AG04449 (cell line): ENCODE measurements at regions of chr7 and their contacts with region 1.

Region 1: DNA sequence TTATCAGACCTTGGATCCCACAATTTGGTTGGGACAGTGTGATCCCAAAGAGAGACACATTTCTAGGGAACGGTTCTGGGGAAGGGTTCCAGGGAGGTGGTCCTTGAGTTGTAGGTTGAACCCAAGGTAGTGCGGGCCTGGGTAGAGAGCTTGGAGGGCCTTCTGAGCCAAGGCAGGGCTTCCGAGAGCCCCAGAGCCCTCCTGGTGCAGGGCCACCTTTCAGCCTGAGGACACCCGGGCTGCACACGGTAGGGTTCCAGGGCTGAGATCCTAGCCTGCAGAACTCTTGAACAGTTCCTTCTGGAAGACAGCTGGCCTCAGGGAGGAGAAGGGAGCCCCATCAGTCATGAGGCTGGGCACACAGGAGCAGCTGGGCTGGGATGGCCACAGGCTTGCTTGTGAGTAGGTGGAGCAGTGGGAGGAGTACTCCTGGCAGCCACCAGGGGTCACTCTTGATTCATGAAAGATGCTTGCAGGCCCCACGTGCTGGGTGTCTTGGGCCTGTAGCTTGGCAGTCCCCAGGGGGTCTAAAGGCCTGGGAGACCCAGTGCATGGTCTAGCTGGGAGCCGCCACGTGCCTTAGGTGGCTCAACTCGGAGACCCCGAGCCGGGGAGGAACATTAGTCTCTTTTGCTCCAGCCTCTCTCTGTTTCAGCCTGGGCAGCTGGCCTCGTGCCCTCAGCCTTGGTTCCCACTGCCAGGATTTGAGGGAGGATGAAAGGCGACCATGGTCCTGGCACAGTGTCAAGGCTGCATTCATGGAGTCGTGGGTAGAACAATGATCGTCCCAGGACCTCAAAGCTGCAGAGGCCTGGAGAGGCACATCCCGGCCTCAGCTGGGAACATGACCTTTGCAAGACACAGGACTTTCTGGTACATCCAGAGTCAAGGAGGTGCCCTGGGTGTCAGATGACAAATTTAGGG is 381.6 kb downstream of the TYW1 start:
- DNase-seq: peak; percentile 16
- H3K4me3 ChIP-seq: no peak overlapping the region
- CTCF ChIP-seq: peak; percentile 80

Region 2: DNA sequence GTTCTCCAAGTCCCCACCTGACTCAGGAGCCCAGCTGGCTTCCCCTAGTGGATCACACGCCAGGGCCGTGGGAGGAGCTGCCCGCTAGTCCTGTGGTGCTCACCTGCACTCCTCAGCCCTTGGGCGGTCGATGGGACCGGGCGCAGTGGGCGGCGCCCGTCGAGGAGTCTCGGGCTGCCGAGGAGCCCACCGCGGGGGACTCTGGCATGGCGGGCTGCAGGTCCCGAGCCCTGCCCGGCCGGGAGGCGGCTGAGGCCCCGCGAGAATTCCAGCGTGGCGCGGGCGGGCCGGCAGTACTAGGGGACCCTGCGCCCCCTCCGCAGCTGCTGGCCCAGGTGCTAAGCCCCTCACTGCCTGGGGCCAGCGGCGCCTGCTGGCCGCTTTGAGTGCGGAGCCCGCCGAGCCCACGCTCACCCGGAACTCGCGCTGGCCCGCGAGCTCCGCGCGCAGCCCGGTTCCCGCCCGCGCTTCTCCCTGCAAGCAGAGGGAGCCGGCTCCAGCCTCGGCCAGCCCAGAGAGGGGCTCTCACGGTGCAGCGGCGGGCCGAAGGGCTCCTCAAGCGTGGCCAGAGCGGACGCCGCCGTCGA is 13.7 kb before region 1 on chr7:
- CTCF ChIA-PET with region 1: interaction called, 10 read pairs
- POLR2A ChIA-PET with region 1: no interaction called
- DNase-seq: no peak
- H3K4me3 ChIP-seq: no peak overlapping the region
- CTCF ChIP-seq: no peak

Region 3: DNA sequence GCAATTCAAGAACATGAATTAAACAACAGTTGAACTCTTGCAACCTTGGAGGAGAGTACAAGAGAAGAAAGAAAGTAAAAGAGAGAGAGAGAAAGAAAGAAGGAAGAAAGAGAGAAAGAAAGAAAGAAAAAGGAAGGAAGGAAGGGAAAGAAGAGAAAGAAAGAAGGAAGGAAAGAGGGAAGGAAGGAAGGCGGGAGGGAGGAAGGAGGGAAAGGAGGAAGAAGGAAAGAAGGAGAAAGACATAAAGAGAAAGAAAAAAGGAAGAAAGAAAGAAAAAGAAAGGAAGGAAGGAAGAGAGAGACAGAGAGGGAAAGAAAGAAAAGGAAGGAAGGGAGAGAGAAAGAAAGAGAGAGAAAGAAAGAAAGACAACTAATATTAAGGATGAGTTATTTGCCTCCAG is 725.1 kb after region 1 on chr7:
- CTCF ChIA-PET with region 1: no interaction called
- POLR2A ChIA-PET with region 1: no interaction called
- DNase-seq: no peak
- H3K4me3 ChIP-seq: no peak overlapping the region
- CTCF ChIP-seq: no peak